ENCODE measurements at regions of chr11 and their contacts with region 1.

Region 1: GRCh38 chr11:59753650-59754493 is 1.3 kb upstream of the STX3 start:
- H3K4me3 ChIP-seq: peak overlapping the region; percentile 82
- H3K27ac ChIP-seq: no peak overlapping the region; the same call in 1 of the 2 replicates
- H3K4me1 ChIP-seq: no peaks in the 10 kb centered on the region
- CTCF ChIP-seq: peak; percentile 89

Region 2: GRCh38 chr11:59787255-59787588 is 33.4 kb after region 1 on chr11:
- CTCF ChIA-PET with region 1: interaction called, 10 read pairs
- POLR2A ChIA-PET with region 1: interaction called, 18 read pairs
- H3K4me3 ChIP-seq: no peak overlapping the region
- H3K27ac ChIP-seq: no peak overlapping the region
- H3K4me1 ChIP-seq: no peaks in the 10 kb centered on the region
- CTCF ChIP-seq: no peak

Region 3: GRCh38 chr11:59802639-59803176 is 48.8 kb after region 1 on chr11:
- CTCF ChIA-PET with region 1: interaction called, 110 read pairs
- POLR2A ChIA-PET with region 1: interaction called, 28 read pairs
- H3K4me3 ChIP-seq: no peak overlapping the region
- H3K27ac ChIP-seq: no peak overlapping the region
- H3K4me1 ChIP-seq: no peaks in the 10 kb centered on the region
- CTCF ChIP-seq: peak; percentile 36; the same call in 1 of the 2 replicates

Region 4: DNA sequence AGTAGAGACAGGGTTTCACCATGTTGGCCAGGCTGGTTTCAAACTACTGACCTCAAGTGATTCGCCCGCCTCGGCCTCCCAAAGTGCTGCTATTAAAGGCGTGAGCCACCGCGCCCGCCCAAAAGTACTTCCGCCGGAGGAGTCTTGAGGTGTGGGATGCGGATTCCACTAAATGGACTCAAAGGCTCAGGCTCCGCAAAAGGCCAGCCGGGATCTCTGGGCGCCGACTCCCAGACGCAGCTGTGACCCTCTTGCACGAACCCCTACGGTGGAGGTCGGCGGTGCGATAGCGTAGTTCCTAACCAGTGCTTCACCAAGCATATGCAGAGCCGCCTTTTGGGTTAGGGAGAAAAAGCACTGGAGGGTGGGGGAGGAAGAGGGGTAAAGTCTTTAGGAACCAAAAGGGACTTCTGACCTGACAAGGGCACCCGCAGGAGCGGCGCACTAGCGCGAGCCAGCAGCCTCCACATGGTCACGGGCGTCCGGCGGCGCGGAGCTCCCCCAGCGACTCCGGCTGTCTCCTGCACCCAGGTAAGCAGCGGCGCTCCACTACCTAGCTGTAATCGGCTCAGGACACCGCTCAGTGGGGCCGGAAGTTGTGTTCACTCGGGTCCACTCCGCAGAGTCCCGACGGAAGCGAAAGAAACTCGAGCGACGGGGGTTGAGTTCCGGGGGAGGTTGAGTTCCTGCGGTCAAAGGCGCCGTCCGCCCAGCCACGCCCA is 56.5 kb after region 1 on chr11 and contains the start of gene MRPL16:
- CTCF ChIA-PET with region 1: interaction called, 110 read pairs
- POLR2A ChIA-PET with region 1: interaction called, 16 read pairs
- H3K4me3 ChIP-seq: peak within 1 kb of the TSS; percentile 100
- H3K27ac ChIP-seq: peak within 1 kb of the TSS; percentile 38; the same call in 1 of the 2 replicates
- H3K4me1 ChIP-seq: no peaks in the 10 kb centered on the region
- CTCF ChIP-seq: peak; percentile 87

Measured in HEK293 (cell line).